Tibial artery (tissue), 4 donors: ENCODE measurements at regions of chr2 and their contacts with region 1.

Region 1: GRCh38 chr2:222613715-222614331 is 42.1 kb downstream of the FARSB start:
- DNase-seq: no peak
- H3K4me3 ChIP-seq: no peak overlapping the region
- H3K27ac ChIP-seq: no peak overlapping the region
- H3K4me1 ChIP-seq: peaks cover 0 to 11% (median 5%) of the 10 kb centered on the region in 4 donors
- H3K27me3 ChIP-seq: no peaks in the 10 kb centered on the region
- CTCF ChIP-seq: peak; percentile 54 to 55

Region 2: DNA sequence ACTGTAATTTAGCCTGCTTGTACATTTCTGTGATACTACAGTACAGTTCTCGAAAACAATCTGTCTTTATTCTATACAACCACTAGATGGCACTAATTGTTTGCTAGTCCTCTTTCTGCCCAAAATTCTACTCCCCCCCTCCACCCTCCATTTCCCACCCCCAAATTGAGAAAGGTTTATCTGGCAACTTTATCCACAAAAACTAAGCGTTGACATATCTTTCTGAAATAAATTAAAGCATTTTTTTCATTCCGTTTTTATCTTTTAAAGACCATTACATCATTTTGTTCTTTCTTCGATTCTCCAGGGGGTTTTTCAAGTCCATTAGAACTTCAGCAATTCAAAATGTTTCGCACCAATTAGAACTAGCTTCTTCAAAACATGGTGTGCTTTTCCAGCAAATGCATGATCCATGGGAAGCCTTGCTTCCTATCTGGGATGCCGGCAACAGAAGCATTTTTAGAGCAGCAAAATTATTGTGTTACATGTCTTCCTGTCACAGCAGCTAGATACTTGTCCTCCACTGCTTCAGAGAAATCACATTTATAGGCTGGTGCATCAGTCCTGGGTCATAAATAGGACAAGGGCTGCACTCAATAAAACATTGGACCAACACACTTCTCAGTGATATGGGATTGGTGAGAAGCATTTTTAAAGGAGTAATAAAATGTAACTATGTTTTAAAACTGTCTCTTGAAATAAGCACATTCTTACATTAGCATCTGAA is 556.3 kb before region 1 on chr2:
- intact Hi-C with region 1: loop called (anchors 10 kb)
- DNase-seq: no peak
- H3K4me3 ChIP-seq: no peak overlapping the region
- H3K27ac ChIP-seq: no peak overlapping the region
- H3K4me1 ChIP-seq: no peaks in the 10 kb centered on the region
- H3K27me3 ChIP-seq: peaks cover 0 to 22% of the 10 kb centered on the region in 2 donors
- CTCF ChIP-seq: peak; percentile 40 to 55

Region 3: DNA sequence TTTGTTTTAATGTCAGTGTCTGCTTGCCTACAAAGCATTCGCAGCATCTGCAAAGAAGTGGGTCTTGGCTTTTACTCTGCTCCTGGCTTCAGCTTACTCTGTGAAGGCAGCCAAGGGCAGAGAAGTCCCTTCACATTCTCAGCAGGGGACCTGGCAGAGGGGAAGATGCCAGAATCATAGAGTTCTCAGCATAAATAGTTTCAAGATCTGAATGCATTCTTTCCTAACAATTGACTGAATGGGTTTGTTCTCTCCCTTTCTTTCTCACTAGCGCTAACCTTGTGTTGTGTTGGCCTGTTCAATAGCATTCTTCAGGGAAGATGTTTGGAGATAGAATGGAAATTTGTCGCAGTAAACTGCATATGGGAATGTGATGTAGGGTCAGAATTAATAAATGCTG is 64.8 kb before region 1 on chr2:
- intact Hi-C with region 1: no loop called
- DNase-seq: no peak
- H3K4me3 ChIP-seq: no peak overlapping the region
- H3K27ac ChIP-seq: no peak overlapping the region
- H3K4me1 ChIP-seq: no peaks in the 10 kb centered on the region
- H3K27me3 ChIP-seq: peaks cover 0 to 3% of the 10 kb centered on the region in 2 donors
- CTCF ChIP-seq: no peak

Region 4: GRCh38 chr2:222598611-222599010 is 15.2 kb before region 1 on chr2:
- intact Hi-C with region 1: no loop called
- DNase-seq: no peak
- H3K4me3 ChIP-seq: no peak overlapping the region
- H3K27ac ChIP-seq: no peak overlapping the region
- H3K4me1 ChIP-seq: no peaks in the 10 kb centered on the region
- H3K27me3 ChIP-seq: no peaks in the 10 kb centered on the region
- CTCF ChIP-seq: no peak